ENCODE measurements at regions of chr11 and their contacts with region 1.

Region 1: GRCh38 chr11:112588252-112588694 is 327.6 kb upstream of the PLET1 start:
- DNase-seq: peak; percentile 38 to 64
- ATAC-seq: peak; percentile 52 to 87 (median 82)
- H3K4me3 ChIP-seq: no peak overlapping the region
- H3K27ac ChIP-seq: no peak overlapping the region
- H3K4me1 ChIP-seq: peaks cover 0 to 11% (median 0%) of the 10 kb centered on the region in 9 donors
- H3K27me3 ChIP-seq: peaks cover 0 to 4% (median 0%) of the 10 kb centered on the region in 7 donors
- CTCF ChIP-seq: peak; percentile 54 to 84 (median 73)

Region 2: DNA sequence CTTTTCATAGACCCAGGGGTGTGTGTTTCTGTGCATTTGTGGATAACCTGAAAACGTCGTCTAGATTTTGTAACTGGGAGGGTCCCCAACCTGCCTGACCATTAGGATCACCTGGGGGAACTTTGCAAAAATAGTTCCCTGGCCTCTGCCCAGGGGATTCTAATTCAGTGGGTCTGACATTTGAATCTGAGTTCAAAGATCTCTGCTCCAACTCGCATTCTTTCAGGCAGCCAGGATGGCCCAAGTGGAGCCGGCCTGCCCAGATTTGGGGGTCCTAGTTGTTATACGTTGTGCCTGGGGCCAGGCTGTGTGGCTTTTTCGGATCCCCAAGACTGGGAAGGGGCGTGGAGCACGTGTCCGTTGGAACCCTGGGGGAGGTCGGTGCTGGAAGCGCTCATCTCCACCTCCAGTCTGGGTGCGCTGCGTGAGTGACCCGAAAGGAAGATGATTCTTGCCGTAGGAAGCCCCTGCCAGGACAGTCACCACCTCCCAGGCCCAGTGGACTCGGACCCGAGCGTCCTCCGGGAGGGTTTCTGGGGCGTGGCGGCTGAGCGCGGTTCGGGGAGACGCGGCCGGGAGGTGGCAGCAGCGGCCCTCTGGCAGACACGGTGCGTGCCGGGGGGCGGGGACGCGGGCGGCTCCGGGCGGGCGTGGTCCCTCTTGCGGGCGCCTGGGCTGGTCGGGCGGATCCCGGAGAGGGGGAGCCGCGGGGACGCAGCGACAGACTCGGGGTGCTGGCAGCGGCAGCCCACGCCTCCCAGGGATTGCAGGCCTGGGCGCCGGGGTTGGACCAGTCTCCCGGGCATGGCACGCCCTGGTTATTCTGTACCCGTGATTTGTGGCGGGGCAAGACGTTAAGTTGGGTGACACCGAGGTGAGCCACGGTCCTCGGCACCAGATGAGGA is 298.4 kb before region 1 on chr11:
- intact Hi-C with region 1: loop called in 2 of 10 experiments (anchors 5 to 10 kb)
- DNase-seq: peak; percentile 78 to 88
- ATAC-seq: peak; percentile 84 to 96 (median 91)
- H3K4me3 ChIP-seq: peak overlapping the region; percentile 36 to 73 (median 62)
- H3K27ac ChIP-seq: peak overlapping the region in 9 of 10 donors; percentile 42 to 88 (median 78)
- H3K4me1 ChIP-seq: peaks cover 0 to 44% (median 19%) of the 10 kb centered on the region in 9 donors
- H3K27me3 ChIP-seq: no peaks in the 10 kb centered on the region
- CTCF ChIP-seq: peak; percentile 66 to 95 (median 90)

Region 3: GRCh38 chr11:112655371-112655770 is 67.1 kb after region 1 on chr11:
- intact Hi-C with region 1: loop called in 1 of 10 experiments (anchors 5 kb)
- DNase-seq: peak; percentile 74 to 87
- ATAC-seq: peak; percentile 55 to 87 (median 84)
- H3K4me3 ChIP-seq: no peak overlapping the region
- H3K27ac ChIP-seq: peak overlapping the region in 7 of 10 donors; percentile 17 to 72 (median 48)
- H3K4me1 ChIP-seq: peaks cover 8 to 67% (median 22%) of the 10 kb centered on the region in 9 donors
- H3K27me3 ChIP-seq: no peaks in the 10 kb centered on the region
- CTCF ChIP-seq: peak in 6 of 9 donors; percentile 8 to 47 (median 29)

Region 4: GRCh38 chr11:112689851-112690250 is 101.6 kb after region 1 on chr11:
- intact Hi-C with region 1: no loop called
- DNase-seq: no peak
- ATAC-seq: no peak
- H3K4me3 ChIP-seq: no peak overlapping the region
- H3K27ac ChIP-seq: no peak overlapping the region
- H3K4me1 ChIP-seq: no peaks in the 10 kb centered on the region
- H3K27me3 ChIP-seq: no peaks in the 10 kb centered on the region
- CTCF ChIP-seq: no peak

Region 5: DNA sequence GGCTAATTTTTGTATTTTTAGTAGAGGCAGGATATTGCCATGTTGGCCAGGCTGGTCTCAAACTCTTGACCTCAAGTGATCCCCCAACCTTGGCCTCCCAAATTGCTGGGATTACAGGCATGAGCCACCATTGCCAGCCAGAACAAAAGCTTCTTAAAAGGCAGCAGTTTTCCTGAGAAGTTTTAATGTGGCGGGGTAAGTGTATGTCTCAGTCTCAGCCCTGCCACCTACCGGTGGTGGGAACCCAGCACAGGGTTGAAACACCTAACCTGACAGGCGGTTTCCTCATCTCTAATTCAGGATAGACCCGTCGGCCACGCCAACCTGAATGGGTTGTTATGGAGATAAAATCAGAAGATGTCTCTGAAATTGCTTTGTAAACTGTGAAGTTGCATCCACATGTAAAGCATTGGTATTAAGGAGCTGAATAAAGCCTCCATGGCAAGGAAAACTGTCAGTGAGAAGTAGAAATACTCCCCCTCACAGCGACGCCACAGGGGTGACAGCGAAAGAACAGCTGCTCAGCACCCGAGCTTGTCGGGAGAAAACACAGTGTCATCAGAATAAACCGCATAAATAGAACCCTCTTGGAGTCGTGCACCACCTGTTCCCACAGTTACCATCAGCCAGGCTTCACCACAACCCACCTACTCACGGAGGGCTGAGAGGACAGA is 207.0 kb after region 1 on chr11:
- intact Hi-C with region 1: loop called in 6 of 10 experiments (anchors 5 to 10 kb)
- DNase-seq: no peak
- ATAC-seq: peak in 5 of 8 donors; percentile 8 to 72 (median 41)
- H3K4me3 ChIP-seq: no peak overlapping the region
- H3K27ac ChIP-seq: peak overlapping the region in 2 of 10 donors; percentile 62
- H3K4me1 ChIP-seq: peaks cover 0 to 41% (median 12%) of the 10 kb centered on the region in 9 donors
- H3K27me3 ChIP-seq: no peaks in the 10 kb centered on the region
- CTCF ChIP-seq: peak; percentile 11 to 61 (median 51)

Region 6: DNA sequence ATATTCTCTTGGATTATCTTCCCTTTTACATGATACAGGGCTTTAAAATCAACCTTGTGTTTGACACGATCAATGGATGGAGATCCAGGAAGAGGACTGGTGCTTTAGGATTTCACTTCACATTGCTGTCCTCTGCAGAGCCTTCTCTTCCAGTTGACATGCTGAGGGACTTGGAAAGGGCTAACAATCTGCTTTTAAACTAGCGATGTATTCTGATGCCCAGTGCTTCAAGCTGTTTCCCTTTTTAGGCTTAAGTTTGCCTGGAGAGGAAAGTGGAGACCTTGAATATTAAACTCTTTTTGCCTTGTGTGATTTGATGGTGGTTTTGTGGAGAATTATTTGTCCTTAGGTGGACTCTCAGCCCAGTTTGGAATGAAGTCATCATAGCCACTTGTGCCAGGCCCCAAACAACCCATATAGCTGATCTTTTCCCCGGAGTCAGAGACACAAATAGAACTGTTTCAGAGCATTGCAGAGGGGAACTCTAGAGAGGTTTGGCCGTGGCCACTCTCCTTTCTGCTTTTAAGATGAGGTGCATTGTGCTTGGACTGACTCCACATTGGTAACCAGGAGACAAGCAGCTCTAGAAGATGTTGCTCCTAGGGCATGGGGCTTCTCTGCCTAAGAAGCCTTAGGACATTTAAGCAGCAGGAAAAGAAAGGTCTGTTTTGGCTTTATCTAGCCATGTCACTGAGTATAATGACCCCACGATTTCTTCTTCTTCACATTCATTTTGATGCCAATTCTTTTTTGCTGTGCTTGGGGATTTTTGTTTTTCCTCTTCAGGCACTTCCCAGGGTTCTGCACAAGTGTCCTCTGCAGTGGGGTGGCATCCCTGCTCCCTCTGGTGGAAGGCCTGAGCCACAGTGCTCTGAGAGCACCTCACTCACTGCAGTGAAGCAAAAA is 525.8 kb after region 1 on chr11:
- intact Hi-C with region 1: loop called in 7 of 10 experiments (anchors 2 to 10 kb)
- DNase-seq: peak; percentile 43 to 59
- ATAC-seq: peak; percentile 89 to 95 (median 92)
- H3K4me3 ChIP-seq: no peak overlapping the region
- H3K27ac ChIP-seq: peak overlapping the region in 9 of 10 donors; percentile 25 to 71 (median 51)
- H3K4me1 ChIP-seq: peaks cover under 1 to 74% (median 25%) of the 10 kb centered on the region in 9 donors
- H3K27me3 ChIP-seq: peaks cover 0 to 2% (median 0%) of the 10 kb centered on the region in 7 donors
- CTCF ChIP-seq: peak; percentile 41 to 80 (median 68)

Measured in heart right ventricle (tissue), 16 donors.